Activated CD4-positive, alpha-beta T cell treated with anti-CD3 and anti-CD28 coated beads for 36 hours (primary cell): ENCODE measurements at regions of chr6 and their contacts with region 1.

Region 1: GRCh38 chr6:152973916-152974315 is 8.9 kb downstream of the FBXO5 start:
- DNase-seq: no peak
- ATAC-seq: peak; percentile 42
- H3K4me3 Mint-ChIP-seq: no peak overlapping the region
- H3K27ac Mint-ChIP-seq: no peak overlapping the region
- H3K4me1 Mint-ChIP-seq: peaks cover 34% of the 10 kb centered on the region
- H3K27me3 Mint-ChIP-seq: no peaks in the 10 kb centered on the region

Region 2: GRCh38 chr6:153002607-153003365 is 28.9 kb after region 1 on chr6 and contains the start of gene MTRF1L:
- CTCF ChIA-PET with region 1: no interaction called
- POLR2A ChIA-PET with region 1: no interaction called
- intact Hi-C with region 1: loop called in 1 of 2 experiments (anchors 5 kb)
- DNase-seq: peak; percentile 95
- ATAC-seq: peak; percentile 87
- H3K4me3 Mint-ChIP-seq: peak within 1 kb of the TSS; percentile 92
- H3K27ac Mint-ChIP-seq: peak within 1 kb of the TSS; percentile 99
- H3K4me1 Mint-ChIP-seq: peaks cover 36% of the 10 kb centered on the region
- H3K27me3 Mint-ChIP-seq: no peaks in the 10 kb centered on the region
- total RNA-seq, gene MTRF1L: 16.8 to 19.9 TPM

Region 3: DNA sequence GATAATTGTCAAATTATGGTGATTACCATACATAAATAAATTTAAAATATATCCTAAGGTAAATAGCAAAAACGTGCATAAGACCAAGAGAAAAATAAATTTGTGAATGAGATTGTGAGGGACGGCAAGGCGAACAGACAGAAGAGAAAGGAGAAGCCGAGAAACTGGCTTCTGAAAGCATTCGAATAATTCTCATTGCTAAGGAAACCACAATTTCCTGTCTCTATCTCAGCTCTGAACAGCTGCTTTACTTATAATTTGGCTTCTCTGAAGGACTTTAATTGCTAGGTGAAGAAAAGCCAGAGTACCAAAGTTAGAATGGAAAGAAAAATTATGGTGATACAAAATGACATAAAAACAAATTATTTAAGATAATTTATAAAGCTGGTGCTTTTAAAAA is 236.2 kb after region 1 on chr6:
- CTCF ChIA-PET with region 1: no interaction called
- POLR2A ChIA-PET with region 1: no interaction called
- intact Hi-C with region 1: no loop called
- DNase-seq: no peak
- ATAC-seq: no peak
- H3K4me3 Mint-ChIP-seq: no peak overlapping the region
- H3K27ac Mint-ChIP-seq: no peak overlapping the region
- H3K4me1 Mint-ChIP-seq: peaks cover 4% of the 10 kb centered on the region
- H3K27me3 Mint-ChIP-seq: no peaks in the 10 kb centered on the region